ENCODE measurements at regions of chr2 and their contacts with region 1.

Region 1: GRCh38 chr2:234881413-234882241 is 70.2 kb upstream of the SH3BP4 start:
- DNase-seq: peak; percentile 92
- H3K4me3 ChIP-seq: peak overlapping the region; percentile 29
- H3K27ac ChIP-seq: peak overlapping the region; percentile 40
- H3K27me3 ChIP-seq: no peaks in the 10 kb centered on the region
- CTCF ChIP-seq: peak; percentile 89

Region 2: DNA sequence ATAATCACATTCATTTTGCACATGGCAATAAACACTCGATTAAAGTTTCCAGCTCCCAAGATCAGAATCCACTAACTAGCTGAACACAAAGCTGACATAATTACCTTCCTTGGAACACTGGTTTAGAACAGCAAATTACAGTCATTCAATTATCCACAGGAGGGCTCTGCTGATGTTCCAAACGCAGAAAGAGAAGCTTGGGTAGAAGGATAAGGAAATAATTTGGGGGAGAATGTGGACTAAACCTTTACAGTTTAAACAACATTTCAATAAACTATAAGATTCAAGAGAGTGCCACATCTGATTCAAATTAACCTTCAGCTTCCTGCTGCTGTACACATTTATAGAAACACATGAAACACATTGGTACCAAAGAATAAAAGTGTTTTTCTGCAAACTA is 316.9 kb before region 1 on chr2:
- CTCF ChIA-PET with region 1: interaction called, 10 read pairs
- POLR2A ChIA-PET with region 1: no interaction called
- DNase-seq: peak; percentile 49
- H3K4me3 ChIP-seq: no peak overlapping the region
- H3K27ac ChIP-seq: no peak overlapping the region
- H3K27me3 ChIP-seq: no peaks in the 10 kb centered on the region
- CTCF ChIP-seq: peak; percentile 64

Region 3: DNA sequence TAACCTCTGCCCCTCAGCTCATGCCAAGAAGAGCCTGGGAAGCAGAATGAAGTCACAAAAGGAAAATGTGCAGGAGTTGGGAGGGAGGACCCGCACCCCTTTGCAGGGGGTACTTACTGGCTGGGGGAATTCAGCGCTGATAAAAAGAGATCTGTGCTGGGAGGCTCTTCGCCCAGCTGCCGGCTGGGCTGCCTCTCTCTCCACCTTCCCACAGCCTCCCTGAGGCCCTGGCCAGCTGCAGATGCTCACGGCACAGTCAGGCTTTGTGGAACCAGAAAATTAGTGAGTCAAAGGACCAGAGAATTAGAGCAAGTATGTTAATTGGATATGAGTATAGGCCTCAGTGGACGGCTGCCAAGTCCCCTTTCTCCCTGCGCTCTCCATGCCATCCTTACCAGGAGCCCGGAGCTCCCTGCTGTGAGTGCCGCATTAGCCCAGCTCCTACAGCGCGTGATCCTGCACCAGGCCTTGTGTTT is 111.6 kb before region 1 on chr2:
- CTCF ChIA-PET with region 1: no interaction called
- POLR2A ChIA-PET with region 1: interaction called, 15 read pairs
- DNase-seq: peak; percentile 59
- H3K4me3 ChIP-seq: no peak overlapping the region
- H3K27ac ChIP-seq: peak overlapping the region; percentile 71
- H3K27me3 ChIP-seq: no peaks in the 10 kb centered on the region
- CTCF ChIP-seq: no peak

Region 4: GRCh38 chr2:234863043-234863934 is 18.3 kb before region 1 on chr2:
- CTCF ChIA-PET with region 1: interaction called, 17 read pairs
- POLR2A ChIA-PET with region 1: no interaction called
- DNase-seq: peak; percentile 30
- H3K4me3 ChIP-seq: no peak overlapping the region
- H3K27ac ChIP-seq: no peak overlapping the region
- H3K27me3 ChIP-seq: no peaks in the 10 kb centered on the region
- CTCF ChIP-seq: no peak

Region 5: DNA sequence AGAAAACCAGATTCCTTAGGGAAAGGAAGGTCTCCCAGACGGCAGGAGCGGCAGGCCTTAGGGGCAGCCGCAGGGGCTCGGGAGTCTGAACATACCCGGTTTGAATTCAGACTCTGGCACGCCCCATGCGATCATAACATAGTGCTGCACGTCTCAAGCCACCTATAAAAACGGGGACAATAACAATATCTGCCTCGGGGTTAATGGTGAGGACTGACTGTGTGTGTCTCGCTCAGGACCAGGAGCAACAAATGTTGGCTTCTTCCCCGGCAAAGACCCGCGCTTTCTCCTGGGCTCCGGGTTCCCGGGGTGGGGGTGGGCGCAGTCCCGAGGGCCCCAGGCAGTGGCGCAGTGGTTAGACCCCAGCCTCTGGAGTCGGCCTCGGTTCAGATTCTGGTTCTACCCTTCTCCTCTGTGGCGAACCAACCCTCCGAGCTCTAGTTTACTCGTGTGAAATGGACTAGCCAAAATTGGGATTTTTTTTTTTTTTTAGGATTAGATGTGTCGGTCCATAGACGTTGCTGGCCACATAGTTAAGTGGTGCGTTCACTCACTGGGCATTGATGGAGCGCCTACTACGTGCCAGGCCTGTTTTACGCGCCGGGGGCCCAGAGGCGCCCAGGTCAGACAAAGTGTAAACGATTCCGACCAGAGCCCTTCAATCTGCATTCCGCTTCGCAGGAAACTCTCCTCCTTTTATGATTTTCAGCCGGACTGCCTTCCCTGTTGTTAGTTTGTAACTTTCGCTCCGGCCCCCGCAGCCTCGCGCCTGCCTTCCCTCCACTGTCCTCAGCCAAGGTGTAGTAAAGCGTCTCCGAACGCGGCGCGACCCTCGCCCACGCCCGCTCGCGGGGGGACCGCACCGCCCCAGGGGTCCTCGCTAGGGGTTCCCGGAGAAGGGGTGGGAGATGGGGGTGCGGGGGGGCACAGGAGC is 69.4 kb after region 1 on chr2:
- CTCF ChIA-PET with region 1: interaction called, 5 read pairs
- POLR2A ChIA-PET with region 1: interaction called, 32 read pairs
- DNase-seq: no peak
- H3K4me3 ChIP-seq: peak overlapping the region; percentile 67
- H3K27ac ChIP-seq: peak overlapping the region; percentile 94
- H3K27me3 ChIP-seq: no peaks in the 10 kb centered on the region
- CTCF ChIP-seq: no peak

Region 6: GRCh38 chr2:235106874-235107639 is 225.4 kb after region 1 on chr2:
- CTCF ChIA-PET with region 1: interaction called, 21 read pairs
- POLR2A ChIA-PET with region 1: interaction called, 4 read pairs
- DNase-seq: peak; percentile 43
- H3K4me3 ChIP-seq: no peak overlapping the region
- H3K27ac ChIP-seq: no peak overlapping the region
- H3K27me3 ChIP-seq: no peaks in the 10 kb centered on the region
- CTCF ChIP-seq: peak; percentile 82